ENCODE measurements at regions of chr7 and their contacts with region 1.

Region 1: DNA sequence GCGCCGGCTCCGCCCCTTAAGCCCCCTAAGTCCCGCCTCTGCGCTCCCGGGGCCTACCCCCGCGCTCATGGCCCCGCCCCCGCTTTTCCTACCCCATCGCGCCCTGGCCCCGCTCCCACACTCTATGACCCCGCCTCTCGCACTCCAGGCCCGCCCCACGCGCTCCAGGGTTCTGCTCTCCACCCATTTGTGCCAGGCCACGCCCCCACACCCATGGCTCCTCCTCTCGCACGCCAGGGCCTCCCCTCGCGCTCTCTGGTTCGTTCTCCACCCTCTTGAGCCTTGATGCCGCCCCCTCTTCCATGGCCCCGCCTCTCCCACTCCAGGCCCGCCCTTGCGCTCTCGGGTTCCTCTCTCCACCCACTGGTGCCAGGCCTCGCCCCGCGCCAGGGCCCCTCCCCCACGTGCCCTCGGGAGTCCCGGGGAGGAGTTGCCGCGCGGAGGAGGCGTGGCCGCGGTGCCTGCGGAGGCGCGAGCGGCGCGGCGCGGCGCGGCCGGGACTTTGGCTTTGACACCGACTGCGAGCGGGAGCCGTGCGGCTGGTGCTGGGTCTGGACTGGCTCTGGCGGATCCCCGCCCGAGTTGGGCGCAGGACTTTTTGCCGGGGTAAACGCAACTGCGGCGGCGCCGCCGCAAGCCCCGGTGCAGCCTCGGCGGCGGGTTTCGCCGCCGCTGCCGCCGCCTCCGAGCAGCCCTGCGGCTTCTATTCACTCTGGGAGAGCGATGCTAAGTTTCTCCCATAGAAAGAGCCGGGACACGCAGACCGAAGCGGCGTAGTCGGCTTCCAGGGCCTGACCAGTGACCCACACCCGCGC is at the start of gene EEPD1:
- DNase-seq: peak; percentile 100
- ATAC-seq: peak; percentile 95
- total RNA-seq, gene EEPD1: 10.0 TPM

Region 2: GRCh38 chr7:35681231-35682029 is 471.5 kb before region 1 on chr7:
- intact Hi-C with region 1: no loop called
- DNase-seq: no peak
- ATAC-seq: no peak

Region 3: GRCh38 chr7:36291387-36292316 is 138.7 kb after region 1 on chr7:
- intact Hi-C with region 1: loop called (anchors 5 kb)
- DNase-seq: peak; percentile 91
- ATAC-seq: peak; percentile 97

Region 4: GRCh38 chr7:36583318-36583717 is 430.4 kb after region 1 on chr7:
- intact Hi-C with region 1: no loop called
- DNase-seq: no peak
- ATAC-seq: no peak

Measured in Right ventricle myocardium superior (tissue), 1 donor.